GM12878 (cell line): ENCODE measurements at regions of chr7 and their contacts with region 1.

Region 1: DNA sequence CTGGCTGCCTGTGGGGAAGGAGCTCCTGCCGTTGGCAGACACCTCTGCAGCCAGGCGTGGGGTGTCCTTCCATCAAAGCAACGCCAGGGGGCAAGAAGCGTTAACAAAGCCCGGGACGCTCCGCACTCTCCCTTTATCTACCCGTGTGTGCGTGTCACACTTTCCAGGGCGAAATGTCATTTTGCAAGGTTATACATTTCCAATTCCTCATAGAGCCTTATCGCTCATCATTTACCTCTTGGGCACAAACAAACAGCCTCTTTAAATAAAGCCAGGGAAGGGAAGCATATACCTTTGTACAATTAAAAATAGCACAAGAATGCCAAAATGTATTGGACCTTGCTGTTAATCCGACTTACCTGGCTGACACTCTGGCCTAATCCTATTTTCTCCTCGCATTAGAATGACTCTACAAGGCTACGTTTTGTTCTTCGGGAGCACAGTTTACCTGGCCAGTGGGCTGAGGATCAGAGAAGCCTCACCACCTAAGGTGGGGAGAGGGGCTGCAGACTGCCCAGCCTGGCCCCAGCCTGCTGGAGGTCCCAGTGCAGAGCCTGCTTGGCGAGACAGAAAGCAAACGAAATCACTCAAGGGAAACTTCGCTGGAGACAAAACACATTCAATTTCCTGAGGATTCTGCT is 77.6 kb upstream of the EN2 start:
- DNase-seq: no peak
- ATAC-seq: peak; percentile 99
- H3K4me3 ChIP-seq: no peak overlapping the region
- H3K27ac ChIP-seq: no peak overlapping the region
- H3K4me1 ChIP-seq: peaks cover 2% of the 10 kb centered on the region
- H3K27me3 ChIP-seq: peaks cover 19 to 34% of the 10 kb centered on the region in 2 experiments
- CTCF ChIP-seq: peak; percentile 69 to 84 (median 77)
- EP300 ChIP-seq: no peak
- POLR2A ChIP-seq: no peak
- RAD21 ChIP-seq: peak; percentile 61

Region 2: DNA sequence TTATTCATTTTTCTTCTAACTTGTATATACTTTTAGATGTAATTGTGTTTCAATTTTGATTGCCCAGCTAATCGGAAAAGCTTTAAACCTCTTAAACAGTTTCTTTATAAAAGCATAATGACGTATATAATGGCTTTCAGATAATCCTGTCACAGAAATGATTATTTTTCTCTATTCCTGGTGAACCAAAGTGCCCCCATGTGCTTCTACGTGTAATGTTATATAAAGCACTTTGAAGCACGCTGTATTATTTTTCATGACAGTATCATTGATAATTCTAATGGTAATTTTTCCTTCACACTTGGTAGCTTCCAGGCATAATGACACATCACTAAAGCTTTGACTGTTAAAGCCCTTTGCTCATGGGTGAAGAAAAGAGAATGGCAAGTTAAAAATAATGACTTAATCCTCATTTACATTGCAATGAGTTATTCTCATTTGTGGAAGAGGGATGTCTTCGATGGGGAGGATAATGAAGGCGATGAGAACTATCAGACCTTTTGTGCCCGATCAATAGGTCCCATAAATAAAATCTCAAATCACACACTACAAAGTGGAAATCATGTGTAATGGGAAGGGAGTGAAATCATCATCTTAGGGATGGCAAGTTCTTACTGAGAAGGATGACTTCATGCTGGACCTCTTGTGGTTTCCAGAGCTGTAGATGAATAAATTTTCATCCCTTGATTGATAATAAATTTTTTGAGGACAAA is 868.1 kb before region 1 on chr7:
- CTCF ChIA-PET with region 1: no interaction called
- POLR2A ChIA-PET with region 1: no interaction called
- RAD21 ChIA-PET with region 1: no interaction called
- SMC1A ChIA-PET with region 1: no interaction called
- in situ Hi-C with region 1: no loop called
- intact Hi-C with region 1: no loop called
- DNase-seq: no peak
- ATAC-seq: no peak
- H3K4me3 ChIP-seq: no peak overlapping the region
- H3K27ac ChIP-seq: no peak overlapping the region
- H3K4me1 ChIP-seq: no peaks in the 10 kb centered on the region
- H3K27me3 ChIP-seq: no peaks in the 10 kb centered on the region
- CTCF ChIP-seq: no peak
- EP300 ChIP-seq: no peak
- POLR2A ChIP-seq: no peak
- RAD21 ChIP-seq: no peak

Region 3: GRCh38 chr7:155466814-155467733 is 86.7 kb after region 1 on chr7:
- CTCF ChIA-PET with region 1: no interaction called
- POLR2A ChIA-PET with region 1: no interaction called
- RAD21 ChIA-PET with region 1: no interaction called
- SMC1A ChIA-PET with region 1: no interaction called
- in situ Hi-C with region 1: no loop called
- intact Hi-C with region 1: no loop called
- DNase-seq: no peak
- ATAC-seq: peak; percentile 25; the same call in 2 of the 3 replicates
- H3K4me3 ChIP-seq: no peak overlapping the region
- H3K27ac ChIP-seq: no peak overlapping the region
- H3K4me1 ChIP-seq: no peaks in the 10 kb centered on the region
- H3K27me3 ChIP-seq: peaks cover 13 to 53% of the 10 kb centered on the region in 2 experiments
- CTCF ChIP-seq: no peak
- EP300 ChIP-seq: no peak
- POLR2A ChIP-seq: no peak
- RAD21 ChIP-seq: no peak

Region 4: GRCh38 chr7:155533827-155534690 is 153.7 kb after region 1 on chr7:
- CTCF ChIA-PET with region 1: no interaction called
- POLR2A ChIA-PET with region 1: no interaction called
- RAD21 ChIA-PET with region 1: no interaction called
- SMC1A ChIA-PET with region 1: no interaction called
- in situ Hi-C with region 1: no loop called
- intact Hi-C with region 1: loop called (anchors 5 kb)
- DNase-seq: no peak
- ATAC-seq: peak; percentile 92
- H3K4me3 ChIP-seq: no peak overlapping the region
- H3K27ac ChIP-seq: no peak overlapping the region
- H3K4me1 ChIP-seq: no peaks in the 10 kb centered on the region
- H3K27me3 ChIP-seq: peaks cover 14 to 25% of the 10 kb centered on the region in 2 experiments
- CTCF ChIP-seq: peak; percentile 53 to 80 (median 56)
- EP300 ChIP-seq: no peak
- POLR2A ChIP-seq: no peak
- RAD21 ChIP-seq: peak; percentile 42

Region 5: DNA sequence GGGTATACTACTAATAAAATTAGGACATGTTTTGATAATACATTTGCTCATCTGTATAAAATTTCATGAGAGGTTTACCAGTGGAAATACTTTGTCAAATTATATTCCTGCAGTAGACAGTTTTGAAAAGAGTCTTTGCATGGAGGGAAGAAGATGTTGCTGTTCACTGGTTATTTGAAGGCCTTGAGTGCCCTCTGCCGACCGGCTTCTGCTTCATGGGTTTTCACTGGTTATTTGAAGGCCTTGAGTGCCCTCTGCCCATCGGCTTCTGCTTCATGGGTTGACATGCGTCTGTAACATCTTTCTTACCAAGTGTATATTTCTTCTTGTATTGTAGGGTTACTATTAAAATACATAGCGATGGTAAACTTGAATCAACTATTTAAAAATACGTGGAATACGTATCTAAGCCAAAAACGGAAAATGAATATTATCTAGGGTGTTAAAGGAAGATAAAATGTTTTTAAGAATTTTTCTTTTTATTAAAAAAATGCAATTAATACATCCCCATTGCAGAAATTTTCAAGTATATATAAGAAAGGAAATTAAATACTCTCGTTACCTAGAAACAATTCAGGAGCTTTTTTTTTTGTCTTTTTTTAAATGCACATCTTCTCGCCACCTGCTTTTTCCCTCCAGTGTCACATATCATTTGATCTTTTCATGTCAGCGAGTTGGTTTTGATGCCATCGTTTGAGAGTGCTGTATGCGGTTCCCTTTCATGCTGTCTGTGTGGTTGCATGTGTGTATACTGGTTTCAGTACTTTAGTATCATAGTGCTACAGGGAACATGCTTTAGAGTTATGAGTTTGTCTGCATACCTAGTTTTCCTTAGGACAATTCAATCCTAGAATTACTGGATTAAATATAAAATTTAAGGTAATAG is 358.6 kb after region 1 on chr7:
- CTCF ChIA-PET with region 1: no interaction called
- POLR2A ChIA-PET with region 1: no interaction called
- RAD21 ChIA-PET with region 1: no interaction called
- SMC1A ChIA-PET with region 1: no interaction called
- in situ Hi-C with region 1: no loop called
- intact Hi-C with region 1: loop called (anchors 2 kb)
- DNase-seq: peak; percentile 56
- ATAC-seq: peak; percentile 92
- H3K4me3 ChIP-seq: no peak overlapping the region
- H3K27ac ChIP-seq: no peak overlapping the region
- H3K4me1 ChIP-seq: peaks cover 38% of the 10 kb centered on the region
- H3K27me3 ChIP-seq: no peaks in the 10 kb centered on the region
- CTCF ChIP-seq: peak; percentile 64 to 89 (median 66); a peak in 5 of 6 replicates
- EP300 ChIP-seq: no peak
- POLR2A ChIP-seq: no peak
- RAD21 ChIP-seq: peak; percentile 82

Region 6: GRCh38 chr7:155763691-155764437 is 383.5 kb after region 1 on chr7:
- CTCF ChIA-PET with region 1: no interaction called
- POLR2A ChIA-PET with region 1: no interaction called
- RAD21 ChIA-PET with region 1: no interaction called
- SMC1A ChIA-PET with region 1: no interaction called
- in situ Hi-C with region 1: loop called (anchors 25 kb)
- intact Hi-C with region 1: no loop called
- DNase-seq: no peak
- ATAC-seq: peak; percentile 73
- H3K4me3 ChIP-seq: no peak overlapping the region
- H3K27ac ChIP-seq: peak overlapping the region; percentile 77
- H3K4me1 ChIP-seq: peaks cover 28% of the 10 kb centered on the region
- H3K27me3 ChIP-seq: no peaks in the 10 kb centered on the region
- CTCF ChIP-seq: no peak
- EP300 ChIP-seq: no peak
- POLR2A ChIP-seq: peak; percentile 47; the same call in 1 of the 2 replicates
- RAD21 ChIP-seq: no peak